AG04450 (cell line): ENCODE measurements at regions of chr12 and their contacts with region 1.

Region 1: GRCh38 chr12:123232807-123233543 is at the starts of genes MPHOSPH9 and MTRFR:
- DNase-seq: peak; percentile 99
- H3K4me3 ChIP-seq: peak within 1 kb of the TSS; percentile 99
- H3K27ac ChIP-seq: peak within 1 kb of the TSS; percentile 76
- H3K27me3 ChIP-seq: no peaks in the 10 kb centered on the region
- CTCF ChIP-seq: no peak
- polyA plus RNA-seq, gene MPHOSPH9: 15.4 and 20.3 TPM in 2 replicates
- polyA plus RNA-seq, gene MTRFR: 9.4 TPM in 2 replicates

Region 2: GRCh38 chr12:122374707-122375106 is 858.3 kb before region 1 on chr12:
- CTCF ChIA-PET with region 1: no interaction called
- POLR2A ChIA-PET with region 1: no interaction called
- DNase-seq: no peak
- H3K4me3 ChIP-seq: no peak overlapping the region
- H3K27ac ChIP-seq: no peak overlapping the region
- H3K27me3 ChIP-seq: no peaks in the 10 kb centered on the region
- CTCF ChIP-seq: no peak

Region 3: DNA sequence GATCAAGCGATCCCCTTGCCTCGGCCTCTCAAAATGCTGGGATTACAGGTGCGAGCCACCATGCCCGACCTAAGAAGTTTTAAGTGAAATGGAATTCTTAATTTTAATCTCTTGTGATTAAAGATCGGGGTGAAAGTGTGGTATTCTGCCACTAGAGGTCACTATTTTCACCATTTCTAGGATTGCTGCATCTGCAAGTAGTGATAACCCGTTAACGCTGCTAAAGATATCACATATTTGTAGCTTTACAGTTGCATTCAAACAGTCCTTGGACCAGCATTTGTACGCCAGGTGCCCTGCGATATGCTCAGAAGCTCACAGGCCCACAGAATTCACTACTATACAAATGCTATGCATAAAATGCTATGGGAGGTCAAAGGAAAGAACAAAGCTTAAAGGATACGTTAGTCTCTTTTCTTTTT is 439.3 kb before region 1 on chr12:
- CTCF ChIA-PET with region 1: interaction called, 31 read pairs
- POLR2A ChIA-PET with region 1: no interaction called
- DNase-seq: peak; percentile 38
- H3K4me3 ChIP-seq: no peak overlapping the region
- H3K27ac ChIP-seq: no peak overlapping the region
- H3K27me3 ChIP-seq: no peaks in the 10 kb centered on the region
- CTCF ChIP-seq: peak; percentile 67

Region 4: GRCh38 chr12:122860346-122861090 is 372.5 kb before region 1 on chr12:
- CTCF ChIA-PET with region 1: interaction called, 28 read pairs
- POLR2A ChIA-PET with region 1: interaction called, 3 read pairs
- DNase-seq: peak; percentile 46
- H3K4me3 ChIP-seq: no peak overlapping the region
- H3K27ac ChIP-seq: no peak overlapping the region
- H3K27me3 ChIP-seq: no peaks in the 10 kb centered on the region
- CTCF ChIP-seq: peak; percentile 89

Region 5: GRCh38 chr12:122974274-122974891 is 258.6 kb before region 1 on chr12:
- CTCF ChIA-PET with region 1: interaction called, 27 read pairs
- POLR2A ChIA-PET with region 1: interaction called, 26 read pairs
- DNase-seq: peak; percentile 93
- H3K4me3 ChIP-seq: peak overlapping the region; percentile 98
- H3K27ac ChIP-seq: peak overlapping the region; percentile 90
- H3K27me3 ChIP-seq: no peaks in the 10 kb centered on the region
- CTCF ChIP-seq: no peak

Region 6: GRCh38 chr12:123005081-123005626 is 227.8 kb before region 1 on chr12:
- CTCF ChIA-PET with region 1: interaction called, 10 read pairs
- POLR2A ChIA-PET with region 1: interaction called, 4 read pairs
- DNase-seq: no peak
- H3K4me3 ChIP-seq: no peak overlapping the region
- H3K27ac ChIP-seq: no peak overlapping the region
- H3K27me3 ChIP-seq: no peaks in the 10 kb centered on the region
- CTCF ChIP-seq: no peak

Region 7: GRCh38 chr12:123250484-123251383 is 17.8 kb after region 1 on chr12:
- CTCF ChIA-PET with region 1: interaction called, 8 read pairs
- POLR2A ChIA-PET with region 1: interaction called, 14 read pairs
- DNase-seq: no peak
- H3K4me3 ChIP-seq: no peak overlapping the region
- H3K27ac ChIP-seq: no peak overlapping the region
- H3K27me3 ChIP-seq: no peaks in the 10 kb centered on the region
- CTCF ChIP-seq: no peak

Region 8: DNA sequence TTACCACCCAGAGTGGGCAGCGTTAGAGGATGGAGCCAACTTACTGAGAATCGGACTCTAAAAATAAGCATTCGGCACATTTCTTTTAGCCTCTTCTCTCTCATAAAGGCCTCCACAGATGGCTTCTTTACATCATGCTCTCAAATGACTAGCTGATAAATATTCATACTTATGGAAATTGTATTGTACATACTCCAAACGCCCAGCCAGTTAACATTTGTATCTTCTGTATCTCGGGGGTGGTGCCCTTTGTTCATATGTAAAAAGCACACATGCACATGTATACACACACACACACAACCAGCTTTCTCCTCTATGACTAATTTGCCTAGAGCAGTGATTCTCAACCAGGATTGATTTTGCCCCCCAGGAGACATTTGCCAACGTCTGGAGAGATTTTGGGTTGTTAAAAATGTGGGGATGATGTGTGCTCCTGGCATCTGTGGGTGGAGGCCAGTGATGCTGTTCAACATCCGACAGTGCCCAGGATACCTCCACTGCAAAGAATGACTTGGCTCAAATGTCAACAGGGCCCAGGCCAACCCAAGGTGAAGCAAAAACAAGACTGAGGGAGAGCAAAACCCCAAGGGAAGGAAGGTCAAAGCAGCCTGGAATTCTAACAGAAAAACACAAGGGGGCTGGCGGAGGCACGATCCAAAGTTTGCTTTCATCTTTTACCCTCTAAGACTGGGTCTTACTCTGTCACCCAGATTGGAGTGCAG is 53.8 kb after region 1 on chr12:
- CTCF ChIA-PET with region 1: no interaction called
- POLR2A ChIA-PET with region 1: no interaction called
- DNase-seq: no peak
- H3K4me3 ChIP-seq: no peak overlapping the region
- H3K27ac ChIP-seq: no peak overlapping the region
- H3K27me3 ChIP-seq: no peaks in the 10 kb centered on the region
- CTCF ChIP-seq: no peak

Region 9: GRCh38 chr12:123436017-123436964 is 203.3 kb after region 1 on chr12 and contains the start of gene RILPL2:
- CTCF ChIA-PET with region 1: no interaction called
- POLR2A ChIA-PET with region 1: no interaction called
- DNase-seq: no peak
- H3K4me3 ChIP-seq: peak within 1 kb of the TSS; percentile 90
- H3K27ac ChIP-seq: peak within 1 kb of the TSS; percentile 65
- H3K27me3 ChIP-seq: no peaks in the 10 kb centered on the region
- CTCF ChIP-seq: 0 out of 2 replicates have a peak, but pooled peaks have one; percentile 7
- polyA plus RNA-seq, gene RILPL2: 2.9 and 3.3 TPM in 2 replicates

Region 10: DNA sequence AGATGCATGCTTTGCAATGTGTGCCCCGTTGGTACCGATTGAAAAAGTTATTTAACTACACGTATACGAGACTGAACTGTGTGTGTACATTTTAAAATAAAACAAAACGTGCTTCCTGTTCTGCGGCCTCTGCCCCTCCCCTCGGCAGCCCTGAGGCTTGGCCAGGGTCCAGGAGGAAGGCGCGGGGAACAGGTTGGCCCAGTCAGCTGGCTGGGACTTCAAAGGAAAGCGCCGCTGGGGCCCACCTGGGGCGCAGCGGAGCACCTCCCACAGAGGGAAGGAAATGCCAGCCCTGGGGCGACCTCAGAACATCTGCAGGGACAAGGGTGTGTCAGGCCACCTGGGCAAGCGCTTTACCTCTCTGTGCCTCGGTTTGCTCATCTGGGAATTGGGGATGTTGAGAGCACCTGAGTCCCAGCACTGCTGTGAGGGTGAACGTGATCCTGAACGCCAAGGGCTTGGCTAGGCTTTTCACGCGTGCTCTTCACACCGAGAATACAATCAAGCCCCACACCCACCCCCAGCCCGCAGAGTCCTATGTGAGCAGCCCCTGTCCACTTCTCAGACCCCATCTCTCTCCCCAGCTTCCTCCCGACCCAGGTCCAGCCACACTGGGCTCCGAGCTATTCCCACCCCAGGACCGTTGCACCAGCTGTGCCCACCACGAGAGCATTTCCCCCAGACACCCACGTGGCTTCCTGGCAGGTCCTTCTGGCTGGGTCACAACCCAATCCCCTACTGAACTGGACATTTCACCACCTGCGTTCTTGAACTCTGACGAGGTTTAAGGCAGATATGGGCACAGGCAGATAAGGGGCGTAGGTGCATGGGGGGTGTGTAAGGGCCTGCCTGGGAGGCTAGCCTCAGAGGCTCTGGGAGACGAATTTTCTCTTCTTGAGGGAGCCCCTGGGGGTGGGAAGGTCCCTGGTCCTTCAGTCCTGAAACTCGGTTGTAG is 1376.3 kb after region 1 on chr12:
- CTCF ChIA-PET with region 1: no interaction called
- POLR2A ChIA-PET with region 1: no interaction called
- DNase-seq: no peak
- H3K4me3 ChIP-seq: no peak overlapping the region
- H3K27ac ChIP-seq: peak overlapping the region; percentile 21
- H3K27me3 ChIP-seq: peaks cover 24% of the 10 kb centered on the region
- CTCF ChIP-seq: no peak